ENCODE measurements at regions of chr7 and their contacts with region 1.

Region 1: GRCh38 chr7:1769286-1770200 is 99.5 kb downstream of the ELFN1 start:
- DNase-seq: no peak
- H3K4me3 ChIP-seq: no peak overlapping the region
- CTCF ChIP-seq: no peak

Region 2: GRCh38 chr7:1619152-1620006 is 150.2 kb before region 1 on chr7:
- in situ Hi-C with region 1: loop called (anchors 10 kb)
- DNase-seq: no peak
- H3K4me3 ChIP-seq: no peak overlapping the region
- CTCF ChIP-seq: no peak